GM18951 (cell line): ENCODE measurements at regions of chr11 and their contacts with region 1.

Region 1: DNA sequence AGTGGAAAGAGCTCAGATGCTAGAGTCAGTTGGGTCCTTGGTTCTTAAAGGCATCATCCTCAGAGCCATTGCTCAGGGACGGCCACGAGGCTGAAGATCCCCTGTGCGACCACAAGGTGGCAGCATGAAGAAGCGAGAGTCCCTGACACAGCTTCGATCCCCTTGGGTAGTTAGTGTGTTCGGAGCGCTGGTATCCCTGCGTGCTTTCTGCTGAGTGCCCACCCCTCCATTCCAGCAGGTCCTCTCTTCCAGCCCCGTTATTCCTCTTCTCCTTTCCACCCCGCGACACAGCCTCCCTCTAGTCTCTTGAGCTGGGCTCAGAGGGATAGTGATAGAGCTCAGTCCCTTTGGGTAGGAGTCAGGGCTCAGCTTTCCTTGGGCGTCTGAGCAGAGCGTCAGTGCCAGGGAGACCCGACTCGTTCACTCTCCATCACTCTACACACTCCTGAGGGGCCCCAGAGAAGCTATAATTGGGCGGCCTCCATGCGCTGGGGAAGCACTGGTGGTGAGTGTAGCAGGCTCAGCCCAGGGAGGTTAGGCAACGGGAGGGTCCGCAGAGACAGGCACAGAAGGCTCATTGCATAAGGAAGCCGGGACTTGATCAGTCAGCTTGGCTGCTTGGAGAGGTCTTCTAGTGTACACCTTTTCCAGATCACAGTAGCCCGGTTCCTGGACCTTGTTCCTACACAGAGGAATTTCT is at the start of gene OR51D1:
- POLR2A ChIP-seq: no peak

Region 2: DNA sequence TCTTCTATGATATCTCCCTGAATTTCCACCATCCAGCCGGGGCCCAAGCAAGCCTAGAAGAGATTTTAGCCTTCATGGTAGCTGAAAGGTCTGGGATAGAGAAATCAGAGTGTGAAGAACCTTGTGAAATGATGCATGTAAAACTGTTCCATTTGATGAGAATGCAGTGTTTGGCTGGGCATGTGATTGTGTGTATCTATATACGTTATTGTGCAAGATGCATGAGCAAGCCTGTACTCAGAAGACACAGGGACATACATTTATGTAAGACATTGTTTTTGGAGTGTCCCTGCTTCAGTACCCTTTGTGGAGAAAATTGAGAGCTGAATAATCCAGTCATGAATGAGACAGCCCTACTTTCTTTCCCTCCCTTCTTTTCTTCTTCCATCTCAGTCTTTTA is 203.3 kb before region 1 on chr11:
- in situ Hi-C with region 1: no loop called
- POLR2A ChIP-seq: no peak

Region 3: DNA sequence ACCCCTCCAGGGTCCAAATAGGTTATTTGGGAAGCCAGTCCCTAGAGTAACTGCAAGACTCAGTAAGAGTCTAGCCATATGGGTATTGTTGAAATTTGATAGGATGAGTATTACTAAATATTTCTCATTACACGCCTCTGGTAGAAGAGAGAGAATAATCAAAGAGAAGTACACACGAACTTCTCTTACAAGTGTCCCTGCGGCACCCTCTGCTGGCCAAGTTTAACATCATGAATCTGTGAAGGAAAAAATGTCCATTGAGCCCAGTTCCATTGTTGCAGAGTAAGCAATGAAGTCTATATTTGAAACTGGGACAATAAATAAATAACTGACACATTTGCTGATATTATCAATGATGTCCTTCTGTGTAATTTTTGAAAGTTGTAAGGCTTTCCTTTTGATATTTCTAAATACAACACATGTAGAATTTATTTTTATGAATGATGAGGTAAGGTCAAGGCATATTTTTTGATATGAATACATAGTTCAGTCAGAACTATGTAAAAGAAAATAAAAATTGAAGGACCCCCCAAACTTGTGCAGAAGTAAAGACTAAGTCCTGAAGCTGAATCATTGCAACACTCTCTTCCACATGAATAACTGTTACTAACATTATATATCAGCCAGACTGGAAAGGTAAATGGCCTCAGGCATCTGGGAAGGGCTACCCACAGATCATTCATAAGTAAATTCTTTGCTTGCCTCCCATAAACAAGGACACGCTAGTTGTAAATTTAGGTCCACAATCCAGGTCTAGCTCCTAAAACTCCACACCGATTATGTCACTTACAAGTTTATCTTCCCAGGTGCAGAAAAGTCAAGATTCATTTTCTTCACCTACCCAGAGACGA is 367.5 kb after region 1 on chr11:
- in situ Hi-C with region 1: loop called (anchors 10 kb)
- POLR2A ChIP-seq: no peak